Endothelial cell of umbilical vein (primary cell): ENCODE measurements at regions of chr17 and their contacts with region 1.

Region 1: GRCh38 chr17:42554250-42555121 is 1.8 kb downstream of the HSD17B1 start:
- DNase-seq: peak; percentile 89
- H3K4me3 ChIP-seq: peak overlapping the region; percentile 51 to 65 (median 52)
- H3K27ac ChIP-seq: peak overlapping the region; percentile 77
- H3K4me1 ChIP-seq: peaks cover 14% of the 10 kb centered on the region
- H3K27me3 ChIP-seq: no peaks in the 10 kb centered on the region
- CTCF ChIP-seq: no peak
- POLR2A ChIP-seq: peak; percentile 86

Region 2: GRCh38 chr17:42472709-42473521 is 81.6 kb before region 1 on chr17:
- CTCF ChIA-PET with region 1: no interaction called
- POLR2A ChIA-PET with region 1: no interaction called
- dilution Hi-C with region 1: no loop called
- intact Hi-C with region 1: no loop called
- DNase-seq: no peak
- H3K4me3 ChIP-seq: no peak overlapping the region
- H3K27ac ChIP-seq: no peak overlapping the region
- H3K4me1 ChIP-seq: no peaks in the 10 kb centered on the region
- H3K27me3 ChIP-seq: no peaks in the 10 kb centered on the region
- CTCF ChIP-seq: no peak
- POLR2A ChIP-seq: no peak

Region 3: DNA sequence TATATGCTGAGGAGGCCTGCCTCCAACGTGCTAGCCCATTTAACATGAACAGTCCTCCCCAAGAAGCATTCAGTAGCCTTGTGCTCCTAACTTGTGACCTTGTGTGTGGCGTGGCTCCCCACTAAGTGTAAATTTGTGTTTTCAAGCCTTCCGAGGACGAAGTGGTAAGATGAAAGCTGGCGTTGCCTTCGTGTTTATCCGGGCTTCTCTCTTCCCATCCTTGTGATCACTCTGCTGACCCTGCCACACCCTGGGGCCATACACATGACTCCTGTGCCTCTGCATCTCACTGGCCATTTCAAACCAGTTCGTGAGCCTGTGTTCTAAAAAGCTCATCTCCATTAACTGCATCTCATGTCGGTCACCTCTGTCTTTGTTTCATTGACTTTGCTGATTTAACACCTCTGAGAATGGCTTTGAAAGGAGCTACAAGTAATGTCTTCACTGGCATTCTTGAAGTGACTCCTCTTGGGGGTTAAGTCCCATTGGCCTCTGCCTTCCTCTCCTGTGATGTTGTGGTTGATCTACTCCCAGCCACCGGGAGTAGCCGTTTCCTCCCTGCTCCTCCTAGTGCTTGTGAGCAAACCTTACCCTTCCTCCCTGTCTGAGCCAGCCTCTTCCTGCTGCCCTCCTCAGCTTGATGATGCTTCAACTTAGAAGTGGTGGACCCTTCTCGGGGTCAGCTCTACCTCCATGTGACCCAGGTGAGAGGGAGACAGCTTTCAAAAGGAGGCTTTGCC is 45.9 kb before region 1 on chr17:
- CTCF ChIA-PET with region 1: no interaction called
- POLR2A ChIA-PET with region 1: no interaction called
- dilution Hi-C with region 1: no loop called
- intact Hi-C with region 1: no loop called
- DNase-seq: peak; percentile 55
- H3K4me3 ChIP-seq: no peak overlapping the region
- H3K27ac ChIP-seq: peak overlapping the region; percentile 2
- H3K4me1 ChIP-seq: peaks cover 11% of the 10 kb centered on the region
- H3K27me3 ChIP-seq: no peaks in the 10 kb centered on the region
- CTCF ChIP-seq: no peak
- POLR2A ChIP-seq: no peak

Region 4: GRCh38 chr17:42536048-42536371 is 18.5 kb before region 1 on chr17 and contains the start of gene NAGLU:
- CTCF ChIA-PET with region 1: interaction called, 11 read pairs
- POLR2A ChIA-PET with region 1: no interaction called
- dilution Hi-C with region 1: no loop called
- intact Hi-C with region 1: loop called (anchors 2 kb)
- DNase-seq: peak; percentile 83
- H3K4me3 ChIP-seq: peak within 1 kb of the TSS; percentile 29 to 80 (median 49)
- H3K27ac ChIP-seq: peak within 1 kb of the TSS; percentile 79
- H3K4me1 ChIP-seq: peaks cover 19% of the 10 kb centered on the region
- H3K27me3 ChIP-seq: no peaks in the 10 kb centered on the region
- CTCF ChIP-seq: no peak
- POLR2A ChIP-seq: peak; percentile 64
- total RNA-seq, gene NAGLU: 40.2 and 50.2 TPM in 2 replicates